ENCODE measurements at regions of chr9 and their contacts with region 1.

Region 1: GRCh38 chr9:99416007-99416406 is 193.9 kb downstream of the SEC61B start:
- H3K4me3 Mint-ChIP-seq: no peak overlapping the region
- H3K27ac Mint-ChIP-seq: no peak overlapping the region
- H3K4me1 Mint-ChIP-seq: peaks cover 8% of the 10 kb centered on the region
- H3K27me3 Mint-ChIP-seq: no peaks in the 10 kb centered on the region

Region 2: GRCh38 chr9:99465231-99465907 is 49.4 kb after region 1 on chr9:
- intact Hi-C with region 1: loop called (anchors 10 kb)
- H3K4me3 Mint-ChIP-seq: no peak overlapping the region
- H3K27ac Mint-ChIP-seq: no peak overlapping the region
- H3K4me1 Mint-ChIP-seq: peaks cover 7% of the 10 kb centered on the region
- H3K27me3 Mint-ChIP-seq: peaks cover 3% of the 10 kb centered on the region